ENCODE measurements at regions of chr17 and their contacts with region 1.

Region 1: GRCh38 chr17:7687908-7688807 is at the start of gene WRAP53:
- DNase-seq: peak; percentile 94
- H3K4me3 Mint-ChIP-seq: peak within 1 kb of the TSS; percentile 95
- H3K27ac Mint-ChIP-seq: peak within 1 kb of the TSS; percentile 96
- H3K4me1 Mint-ChIP-seq: peaks cover 40% of the 10 kb centered on the region
- H3K27me3 Mint-ChIP-seq: no peaks in the 10 kb centered on the region
- total RNA-seq, gene WRAP53: 31.5 TPM in 2 replicates

Region 2: DNA sequence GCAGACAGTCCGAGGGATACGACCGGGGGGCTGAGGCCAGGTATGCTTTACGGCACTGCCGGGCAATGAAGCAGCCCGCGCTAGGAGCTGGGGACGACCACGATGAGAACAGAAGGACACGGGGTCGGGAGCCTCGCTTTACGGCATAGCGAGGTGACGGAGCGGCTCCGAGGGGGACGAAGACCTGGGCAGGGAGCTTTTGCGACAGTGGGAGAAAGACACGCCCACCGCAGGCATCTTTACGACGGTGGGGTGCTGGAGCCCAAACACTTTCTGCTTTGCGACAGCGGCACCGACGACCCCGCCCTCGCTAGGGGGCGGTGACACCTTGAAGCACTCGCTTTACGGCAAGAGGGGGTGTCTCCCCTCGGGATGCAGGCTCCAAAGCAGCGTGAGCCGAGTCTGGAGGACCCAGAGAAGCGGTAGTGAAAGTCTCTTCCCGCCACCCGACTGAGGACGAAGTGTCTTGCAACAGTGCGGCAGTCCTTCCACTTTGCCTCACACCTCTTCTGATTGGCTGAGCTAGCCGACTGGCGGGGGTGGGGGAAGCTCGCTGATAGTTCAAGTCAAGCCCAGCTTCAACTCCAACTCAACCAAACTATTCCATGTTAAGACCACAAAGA is 358.7 kb before region 1 on chr17:
- intact Hi-C with region 1: loop called (anchors 1 kb)
- DNase-seq: peak; percentile 94
- H3K4me3 Mint-ChIP-seq: peak overlapping the region; percentile 93
- H3K27ac Mint-ChIP-seq: peak overlapping the region; percentile 94
- H3K4me1 Mint-ChIP-seq: peaks cover 38% of the 10 kb centered on the region
- H3K27me3 Mint-ChIP-seq: no peaks in the 10 kb centered on the region

Region 3: DNA sequence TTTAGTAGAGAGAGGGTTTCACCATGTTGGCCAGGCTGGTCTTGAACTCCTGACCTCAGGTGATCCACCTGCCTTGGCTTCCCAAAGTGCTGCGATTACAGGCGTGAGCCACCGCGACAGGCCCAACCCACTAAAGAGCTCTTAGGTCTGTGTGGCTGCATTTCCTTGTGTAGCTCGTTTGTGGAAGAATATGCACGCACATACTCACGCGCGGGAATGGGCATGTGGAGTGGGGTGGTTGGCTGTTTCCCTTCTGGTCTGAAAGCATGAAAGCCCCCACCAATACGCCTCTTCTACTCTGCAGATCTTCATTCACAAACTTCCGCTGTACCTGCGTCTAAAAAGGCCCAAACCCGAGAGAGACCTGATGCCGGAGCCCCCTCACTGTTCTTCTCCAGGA is 233.2 kb before region 1 on chr17:
- intact Hi-C with region 1: loop called (anchors 1 kb)
- DNase-seq: no peak
- H3K4me3 Mint-ChIP-seq: peak overlapping the region; percentile 87
- H3K27ac Mint-ChIP-seq: peak overlapping the region; percentile 88
- H3K4me1 Mint-ChIP-seq: peaks cover 31% of the 10 kb centered on the region
- H3K27me3 Mint-ChIP-seq: no peaks in the 10 kb centered on the region

Region 4: GRCh38 chr17:7572588-7573323 is 115.4 kb before region 1 on chr17:
- intact Hi-C with region 1: loop called (anchors 1 kb)
- DNase-seq: peak; percentile 100
- H3K4me3 Mint-ChIP-seq: peak overlapping the region; percentile 94
- H3K27ac Mint-ChIP-seq: peak overlapping the region; percentile 100
- H3K4me1 Mint-ChIP-seq: peaks cover 54% of the 10 kb centered on the region
- H3K27me3 Mint-ChIP-seq: peaks cover 2% of the 10 kb centered on the region

Region 5: GRCh38 chr17:7632492-7632894 is 55.7 kb before region 1 on chr17:
- intact Hi-C with region 1: loop called (anchors 1 kb)
- DNase-seq: peak; percentile 19
- H3K4me3 Mint-ChIP-seq: no peak overlapping the region
- H3K27ac Mint-ChIP-seq: no peak overlapping the region
- H3K4me1 Mint-ChIP-seq: peaks cover 7% of the 10 kb centered on the region
- H3K27me3 Mint-ChIP-seq: peaks cover 3% of the 10 kb centered on the region

Region 6: GRCh38 chr17:7856883-7857723 is 168.9 kb after region 1 on chr17 and contains the start of gene NAA38:
- intact Hi-C with region 1: loop called (anchors 1 kb)
- DNase-seq: peak; percentile 92
- H3K4me3 Mint-ChIP-seq: no peak within 1 kb of the TSS
- H3K27ac Mint-ChIP-seq: no peak within 1 kb of the TSS
- H3K4me1 Mint-ChIP-seq: no peaks in the 10 kb centered on the region
- H3K27me3 Mint-ChIP-seq: no peaks in the 10 kb centered on the region
- total RNA-seq, gene NAA38: 36.4 and 43.5 TPM in 2 replicates

Region 7: GRCh38 chr17:8156246-8156992 is 468.3 kb after region 1 on chr17:
- intact Hi-C with region 1: loop called (anchors 10 kb)
- DNase-seq: peak; percentile 100
- H3K4me3 Mint-ChIP-seq: no peak overlapping the region
- H3K27ac Mint-ChIP-seq: no peak overlapping the region
- H3K4me1 Mint-ChIP-seq: peaks cover 56% of the 10 kb centered on the region
- H3K27me3 Mint-ChIP-seq: no peaks in the 10 kb centered on the region

Measured in activated T-helper 1 cell treated with anti-CD3 and anti-CD28 coated beads, Interleukin-12 subunit alpha, Interleukin-12 subunit beta, Interleukin-2, Interleukin-4 antibody, amounts not matched to agents 30 ng/mL and 10 ng/mL and 1 ng/mL, durations not matched to agents 14 hours and 24 hours and 36 hours (primary cell).